ENCODE measurements at regions of chr6 and their contacts with region 1.

Region 1: GRCh38 chr6:165782134-165782533 is 119.1 kb upstream of the PDE10A start:
- DNase-seq: peak; percentile 38
- H3K4me3 ChIP-seq: no peak overlapping the region
- H3K27ac ChIP-seq: no peak overlapping the region
- H3K4me1 ChIP-seq: peaks cover 0 to 3% (median 0%) of the 10 kb centered on the region in 4 donors
- H3K27me3 ChIP-seq: peaks cover 3% of the 10 kb centered on the region
- CTCF ChIP-seq: no peak
- EP300 ChIP-seq: no peak
- POLR2A ChIP-seq: no peak

Region 2: DNA sequence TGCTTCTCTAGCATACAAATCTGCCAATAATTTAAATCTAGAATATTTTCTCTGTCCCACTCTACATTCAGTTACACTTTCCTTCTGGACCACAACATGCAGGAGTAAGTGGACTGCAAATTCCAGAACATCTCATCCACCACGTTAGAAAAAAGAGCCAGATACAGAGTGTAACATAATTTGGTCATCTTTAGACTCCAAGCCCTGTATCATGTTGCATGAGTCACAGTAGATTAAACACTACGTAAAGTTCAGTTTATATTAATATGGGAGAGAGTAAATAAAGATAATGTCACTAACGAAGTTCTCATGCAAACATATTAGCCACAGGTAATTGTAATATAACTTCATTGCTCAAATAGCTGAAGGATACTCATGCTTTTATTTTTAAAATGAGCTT is 799.7 kb before region 1 on chr6:
- in situ Hi-C with region 1: no loop called
- intact Hi-C with region 1: no loop called
- DNase-seq: no peak
- H3K4me3 ChIP-seq: no peak overlapping the region
- H3K27ac ChIP-seq: no peak overlapping the region
- H3K4me1 ChIP-seq: no peaks in the 10 kb centered on the region
- H3K27me3 ChIP-seq: no peaks in the 10 kb centered on the region
- CTCF ChIP-seq: no peak
- EP300 ChIP-seq: no peak
- POLR2A ChIP-seq: no peak

Region 3: DNA sequence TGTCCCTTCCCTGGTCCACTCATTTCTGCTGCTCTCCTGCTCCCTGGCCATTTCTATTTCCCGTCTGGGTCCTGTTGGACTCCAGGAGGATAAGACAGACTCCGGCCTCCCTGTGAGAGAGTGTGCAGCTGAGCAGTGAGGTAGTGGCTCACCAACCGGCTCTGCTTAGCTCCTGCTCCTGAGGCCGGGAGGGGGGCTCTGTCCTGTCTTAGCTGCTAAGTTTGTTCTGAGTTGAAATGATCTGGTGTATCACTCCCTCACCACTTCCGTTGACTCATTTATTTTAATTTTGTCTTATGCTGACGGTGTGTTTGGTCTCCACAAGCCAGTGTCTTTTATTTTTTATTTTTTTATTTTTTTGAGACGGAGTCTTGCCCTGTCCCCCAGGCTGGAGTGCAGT is 29.4 kb after region 1 on chr6:
- in situ Hi-C with region 1: no loop called
- intact Hi-C with region 1: loop called (anchors 1 kb)
- DNase-seq: no peak
- H3K4me3 ChIP-seq: no peak overlapping the region
- H3K27ac ChIP-seq: no peak overlapping the region
- H3K4me1 ChIP-seq: no peaks in the 10 kb centered on the region
- H3K27me3 ChIP-seq: peaks cover 4% of the 10 kb centered on the region
- CTCF ChIP-seq: no peak
- EP300 ChIP-seq: no peak
- POLR2A ChIP-seq: no peak